ENCODE measurements at regions of chr12 and their contacts with region 1.

Region 1: GRCh38 chr12:52884526-52885293 is 20.2 kb downstream of the KRT8 start:
- DNase-seq: no peak

Region 2: GRCh38 chr12:52980693-52981423 is 96.1 kb after region 1 on chr12:
- intact Hi-C with region 1: loop called (anchors 1 kb)
- DNase-seq: peak; percentile 88